ENCODE measurements at regions of chr12 and their contacts with region 1.

Region 1: DNA sequence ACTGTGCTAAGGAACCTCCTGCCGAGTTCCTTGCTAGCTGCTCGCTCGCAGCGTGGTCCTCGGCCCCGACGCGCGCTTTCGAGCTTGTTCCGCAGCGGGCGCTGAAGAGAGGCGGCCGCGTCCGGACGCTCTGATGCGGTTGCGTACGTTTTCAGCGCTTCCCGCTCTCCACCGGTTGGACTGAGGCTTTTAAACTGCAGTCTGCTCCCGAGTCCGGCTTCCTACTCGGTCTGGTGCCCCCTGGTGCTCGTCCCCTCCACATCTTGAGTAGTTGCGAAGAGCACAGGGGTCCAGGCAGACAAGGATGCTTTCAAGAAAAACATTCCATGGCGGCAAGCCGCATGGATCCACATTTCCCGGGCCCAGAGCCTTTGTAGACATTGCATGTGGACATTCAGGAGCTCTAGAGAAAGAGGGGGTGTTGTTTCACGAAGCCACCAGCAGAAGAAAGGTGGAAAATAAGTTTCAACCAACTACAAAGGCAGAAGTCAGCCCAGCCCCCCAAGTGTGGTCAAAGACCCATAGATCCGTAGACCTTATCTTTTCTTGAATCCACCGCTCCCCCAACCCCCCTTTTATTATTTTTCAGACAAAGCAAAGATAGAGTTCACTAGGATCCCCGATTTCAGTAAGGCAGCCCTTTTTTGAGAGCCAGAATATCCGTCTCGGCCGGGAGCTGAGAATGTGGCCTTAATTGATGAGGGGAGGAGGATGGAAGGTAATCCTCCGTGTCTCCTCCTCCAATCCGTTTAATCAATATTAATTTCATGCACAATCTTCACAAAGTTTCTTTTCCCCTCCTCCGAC is 984 bp upstream of the WNK1 start:
- DNase-seq: peak; percentile 85 to 97 (median 94)
- H3K4me3 ChIP-seq: peak overlapping the region in 2 of 4 donors; percentile 79 to 81
- H3K27ac ChIP-seq: peak overlapping the region; percentile 47 to 98 (median 49)
- H3K4me1 ChIP-seq: peaks cover 18 to 39% of the 10 kb centered on the region in 2 donors
- H3K27me3 ChIP-seq: no peaks in the 10 kb centered on the region
- CTCF ChIP-seq: peak; percentile 53 to 86 (median 84)
- POLR2A ChIP-seq: peak; percentile 42 to 69

Region 2: GRCh38 chr12:569803-570434 is 181.5 kb before region 1 on chr12:
- intact Hi-C with region 1: loop called (anchors 5 kb)
- DNase-seq: peak; percentile 86 to 94 (median 91)
- H3K4me3 ChIP-seq: peak overlapping the region in 3 of 4 donors; percentile 16 to 60 (median 44)
- H3K27ac ChIP-seq: peak overlapping the region in 4 of 5 donors; percentile 84 to 97 (median 94)
- H3K4me1 ChIP-seq: peaks cover 12 to 28% of the 10 kb centered on the region in 2 donors
- H3K27me3 ChIP-seq: no peaks in the 10 kb centered on the region
- CTCF ChIP-seq: peak; percentile 90 to 97 (median 94)
- POLR2A ChIP-seq: peak in 1 of 2 donors; percentile 7

Region 3: DNA sequence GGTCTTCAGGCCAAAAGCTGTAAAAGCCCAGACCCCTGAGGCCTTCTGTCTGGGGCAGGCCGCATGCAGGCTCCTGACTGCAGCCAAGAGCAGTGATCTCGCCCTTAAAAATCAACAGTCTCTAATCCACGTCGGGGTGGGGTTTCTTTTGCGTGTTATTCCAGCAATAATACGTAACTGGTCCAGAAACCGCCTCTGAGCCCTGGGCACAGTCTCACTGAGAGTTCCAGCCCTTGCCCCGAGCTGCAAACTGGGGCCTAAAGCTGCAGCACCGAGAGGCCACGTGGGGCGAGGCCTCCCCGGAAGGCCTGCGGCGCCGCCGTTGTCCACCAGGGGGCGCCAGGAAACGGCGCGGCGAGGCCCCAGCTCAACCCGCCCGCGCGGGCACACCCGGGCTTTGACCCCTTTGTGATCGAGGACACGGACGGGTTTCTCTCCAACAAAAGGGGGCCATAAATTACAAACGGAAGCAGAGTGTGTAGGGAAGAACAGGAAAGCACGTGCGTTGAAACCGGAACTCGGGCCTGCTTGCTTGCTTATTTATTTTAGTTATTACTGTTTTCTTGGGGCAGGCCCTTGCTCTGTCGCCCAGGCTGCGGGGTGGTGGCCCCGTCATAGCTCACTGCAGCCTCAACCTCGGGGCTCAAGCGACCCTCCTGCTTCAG is 175.3 kb before region 1 on chr12:
- intact Hi-C with region 1: loop called (anchors 5 kb)
- DNase-seq: peak; percentile 66 to 83 (median 74)
- H3K4me3 ChIP-seq: peak overlapping the region in 1 of 4 donors; percentile 7
- H3K27ac ChIP-seq: peak overlapping the region in 1 of 5 donors; percentile 66
- H3K4me1 ChIP-seq: peaks cover 22 to 30% of the 10 kb centered on the region in 2 donors
- H3K27me3 ChIP-seq: no peaks in the 10 kb centered on the region
- CTCF ChIP-seq: peak; percentile 89 to 99 (median 99)
- POLR2A ChIP-seq: no peak

Region 4: DNA sequence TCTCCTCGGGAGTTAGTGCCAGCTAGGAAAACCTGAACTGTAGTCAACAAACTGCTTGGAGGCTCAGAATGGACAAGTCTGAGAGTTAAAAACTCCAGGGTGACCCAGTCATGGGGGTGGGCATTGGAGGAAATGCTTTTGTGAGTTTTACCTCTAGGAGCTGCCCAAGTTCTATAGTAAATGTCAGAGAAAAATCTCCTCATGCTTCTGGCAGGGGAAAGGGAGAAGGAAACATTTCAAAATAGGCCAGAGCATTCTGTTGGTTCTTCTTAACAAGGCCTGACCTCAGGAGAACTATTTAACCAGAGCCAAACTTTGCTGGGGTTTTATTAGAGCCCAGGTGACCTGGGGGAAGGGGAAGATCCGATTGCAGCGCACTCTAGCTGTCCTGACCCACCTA is 100.4 kb before region 1 on chr12:
- intact Hi-C with region 1: loop called in 1 of 2 experiments (anchors 10 kb)
- DNase-seq: no peak
- H3K4me3 ChIP-seq: no peak overlapping the region
- H3K27ac ChIP-seq: no peak overlapping the region
- H3K4me1 ChIP-seq: peaks cover 4 to 12% of the 10 kb centered on the region in 2 donors
- H3K27me3 ChIP-seq: no peaks in the 10 kb centered on the region
- CTCF ChIP-seq: peak in 1 of 6 experiments; percentile 9
- POLR2A ChIP-seq: no peak

Region 5: DNA sequence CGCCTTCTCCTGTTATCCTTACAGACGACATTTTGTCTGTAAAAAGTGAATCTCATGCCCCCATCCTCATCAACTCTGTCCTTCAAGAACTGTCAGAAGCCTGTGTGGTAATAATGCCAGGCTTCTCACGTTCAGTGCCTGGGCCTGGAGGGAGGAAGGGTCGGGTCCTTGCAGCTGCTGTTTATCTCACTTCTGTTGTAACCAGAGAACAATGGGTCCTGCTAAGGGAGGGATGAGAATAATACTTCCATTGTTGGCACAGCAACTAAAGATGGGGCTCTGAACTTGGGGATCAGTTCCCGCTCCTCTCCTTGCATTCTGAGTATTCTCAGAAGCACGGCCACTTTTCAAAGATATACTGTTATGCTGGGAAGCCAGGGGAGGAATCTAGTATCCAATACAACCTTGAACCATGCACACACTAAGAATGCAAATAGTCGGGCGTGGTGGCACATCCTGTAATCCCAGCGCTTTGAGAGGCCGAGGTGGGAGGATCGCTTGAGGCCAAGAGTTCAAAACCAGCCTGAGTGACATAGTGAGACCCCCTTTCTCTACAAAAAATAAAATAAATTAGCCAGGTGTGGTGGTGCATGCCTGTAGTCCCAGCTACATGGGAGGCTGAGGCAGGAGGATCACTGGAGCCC is 49.4 kb before region 1 on chr12:
- intact Hi-C with region 1: no loop called
- DNase-seq: no peak
- H3K4me3 ChIP-seq: no peak overlapping the region
- H3K27ac ChIP-seq: no peak overlapping the region
- H3K4me1 ChIP-seq: no peaks in the 10 kb centered on the region
- H3K27me3 ChIP-seq: no peaks in the 10 kb centered on the region
- CTCF ChIP-seq: no peak
- POLR2A ChIP-seq: no peak

Region 6: DNA sequence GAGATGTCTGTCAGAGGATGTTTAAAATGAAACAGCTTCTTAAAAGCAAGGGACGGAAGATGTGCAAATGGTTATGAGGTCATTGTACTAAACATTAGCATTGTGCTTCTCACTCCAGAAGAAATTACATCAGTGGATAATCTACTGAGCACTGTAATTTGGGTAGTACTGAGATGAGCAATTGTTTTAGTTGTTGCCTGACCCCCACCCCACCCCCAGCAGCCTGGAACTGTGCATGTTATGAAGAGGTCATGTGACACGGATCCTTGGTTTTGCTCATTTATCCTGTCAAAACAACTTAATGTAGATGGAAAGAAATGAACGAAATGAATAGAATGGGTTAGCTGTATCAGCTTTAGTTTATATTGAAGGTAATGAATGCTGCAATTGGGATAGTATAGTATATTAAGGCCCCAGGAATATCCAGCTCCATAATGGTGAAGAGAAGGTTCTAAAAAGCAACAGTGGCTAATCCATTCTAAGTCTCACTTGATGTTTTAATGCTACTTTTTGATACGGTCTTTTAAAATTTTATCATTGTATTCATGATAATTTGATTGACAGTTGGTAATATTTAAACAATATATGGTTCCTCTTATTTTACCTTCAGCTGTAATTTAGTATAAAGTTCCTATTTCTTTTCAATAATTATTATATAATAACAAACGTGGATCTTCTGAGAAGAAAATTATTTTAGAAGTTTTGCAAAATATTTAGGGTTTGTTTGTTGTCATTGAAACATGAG is 59.4 kb after region 1 on chr12:
- intact Hi-C with region 1: loop called (anchors 5 to 10 kb)
- DNase-seq: no peak
- H3K4me3 ChIP-seq: no peak overlapping the region
- H3K27ac ChIP-seq: no peak overlapping the region
- H3K4me1 ChIP-seq: peaks cover 14 to 29% of the 10 kb centered on the region in 2 donors
- H3K27me3 ChIP-seq: no peaks in the 10 kb centered on the region
- CTCF ChIP-seq: no peak
- POLR2A ChIP-seq: no peak

Region 7: GRCh38 chr12:823028-823698 is 71.8 kb after region 1 on chr12:
- intact Hi-C with region 1: loop called (anchors 5 to 10 kb)
- DNase-seq: no peak
- H3K4me3 ChIP-seq: no peak overlapping the region
- H3K27ac ChIP-seq: no peak overlapping the region
- H3K4me1 ChIP-seq: peaks cover 0 to 12% of the 10 kb centered on the region in 2 donors
- H3K27me3 ChIP-seq: no peaks in the 10 kb centered on the region
- CTCF ChIP-seq: no peak
- POLR2A ChIP-seq: no peak

Region 8: GRCh38 chr12:949453-950191 is 198.2 kb after region 1 on chr12 and contains the start of gene RAD52:
- intact Hi-C with region 1: loop called in 1 of 2 experiments (anchors 10 kb)
- DNase-seq: peak; percentile 96 to 99 (median 97)
- H3K4me3 ChIP-seq: peak within 1 kb of the TSS; percentile 48 to 94 (median 72)
- H3K27ac ChIP-seq: peak within 1 kb of the TSS; percentile 75 to 90 (median 87)
- H3K4me1 ChIP-seq: peaks cover 0 to 16% of the 10 kb centered on the region in 2 donors
- H3K27me3 ChIP-seq: no peaks in the 10 kb centered on the region
- CTCF ChIP-seq: peak; percentile 96 to 100 (median 99)
- POLR2A ChIP-seq: peak; percentile 74 to 85
- total RNA-seq, gene RAD52: 5.5 to 22.6 (median 10.7) TPM

Region 9: GRCh38 chr12:1073652-1074051 is 322.3 kb after region 1 on chr12:
- intact Hi-C with region 1: no loop called
- DNase-seq: no peak
- H3K4me3 ChIP-seq: no peak overlapping the region
- H3K27ac ChIP-seq: no peak overlapping the region
- H3K4me1 ChIP-seq: peaks cover 0 to 9% of the 10 kb centered on the region in 2 donors
- H3K27me3 ChIP-seq: no peaks in the 10 kb centered on the region
- CTCF ChIP-seq: no peak
- POLR2A ChIP-seq: no peak

Region 10: DNA sequence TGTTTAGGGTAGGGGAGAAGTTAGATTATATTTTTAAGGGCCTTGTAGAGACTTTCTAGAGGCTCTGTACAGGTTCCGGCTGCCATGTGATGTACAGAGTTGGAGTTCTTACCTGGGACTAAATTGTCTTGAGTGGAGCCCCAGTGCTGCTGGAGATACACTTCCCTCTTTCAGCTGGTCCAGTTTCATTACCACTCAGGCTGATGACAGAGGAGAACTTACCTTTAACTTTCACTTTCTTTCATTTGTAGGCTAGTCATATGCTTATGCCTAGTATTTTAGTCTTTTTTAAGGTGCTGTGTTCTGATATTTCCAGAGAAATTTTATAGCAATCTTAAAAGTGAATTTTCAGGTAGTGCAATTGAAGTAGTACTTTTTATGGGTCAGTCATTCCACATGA is 356.9 kb after region 1 on chr12:
- intact Hi-C with region 1: no loop called
- DNase-seq: no peak
- H3K4me3 ChIP-seq: no peak overlapping the region
- H3K27ac ChIP-seq: no peak overlapping the region
- H3K4me1 ChIP-seq: peaks cover 0 to 3% of the 10 kb centered on the region in 2 donors
- H3K27me3 ChIP-seq: no peaks in the 10 kb centered on the region
- CTCF ChIP-seq: no peak
- POLR2A ChIP-seq: no peak

Measured in adrenal gland (tissue), 19 donors.